ENCODE measurements at regions of chr15 and their contacts with region 1.

Region 1: DNA sequence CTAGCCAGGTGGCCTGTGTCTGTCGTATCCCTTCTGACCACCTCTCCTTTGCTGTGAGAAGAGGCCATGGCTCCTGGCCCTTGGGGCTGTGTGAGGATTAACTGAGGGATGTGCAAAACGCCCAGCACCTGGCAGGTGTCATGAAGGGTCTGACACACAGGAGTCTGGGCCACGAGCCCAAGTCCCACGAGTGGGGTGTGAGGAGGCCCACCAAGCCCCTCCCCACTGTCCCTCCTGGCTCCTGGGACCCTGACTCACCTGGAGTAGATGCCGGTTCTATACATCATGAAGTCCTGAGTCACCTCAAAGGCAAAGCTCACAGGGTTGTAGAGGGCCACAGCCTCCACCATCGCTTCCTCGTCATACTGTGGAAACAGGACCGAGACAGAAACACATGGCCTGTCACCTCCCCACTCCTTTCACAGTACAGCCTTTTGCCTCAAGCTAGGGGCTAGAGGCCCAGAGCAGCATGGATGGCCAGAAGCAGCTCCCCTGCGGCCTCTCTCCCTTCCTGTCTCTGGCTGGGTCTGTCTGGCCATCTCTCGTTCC is 19.7 kb downstream of the CTSH start:
- DNase-seq: no peak
- ATAC-seq: no peak
- H3K4me3 ChIP-seq: no peak overlapping the region
- H3K27ac ChIP-seq: peak overlapping the region; percentile 57; the same call in 1 of the 2 replicates
- H3K4me1 ChIP-seq: peaks cover 31% of the 10 kb centered on the region
- H3K27me3 ChIP-seq: no peaks in the 10 kb centered on the region
- CTCF ChIP-seq: no peak

Region 2: GRCh38 chr15:78108299-78109084 is 816.7 kb before region 1 on chr15:
- CTCF ChIA-PET with region 1: no interaction called
- POLR2A ChIA-PET with region 1: no interaction called
- in situ Hi-C with region 1: no loop called
- intact Hi-C with region 1: no loop called
- DNase-seq: peak; percentile 38
- ATAC-seq: peak; percentile 92
- H3K4me3 ChIP-seq: no peak overlapping the region
- H3K27ac ChIP-seq: no peak overlapping the region
- H3K4me1 ChIP-seq: no peaks in the 10 kb centered on the region
- H3K27me3 ChIP-seq: no peaks in the 10 kb centered on the region
- CTCF ChIP-seq: peak; percentile 95

Region 3: DNA sequence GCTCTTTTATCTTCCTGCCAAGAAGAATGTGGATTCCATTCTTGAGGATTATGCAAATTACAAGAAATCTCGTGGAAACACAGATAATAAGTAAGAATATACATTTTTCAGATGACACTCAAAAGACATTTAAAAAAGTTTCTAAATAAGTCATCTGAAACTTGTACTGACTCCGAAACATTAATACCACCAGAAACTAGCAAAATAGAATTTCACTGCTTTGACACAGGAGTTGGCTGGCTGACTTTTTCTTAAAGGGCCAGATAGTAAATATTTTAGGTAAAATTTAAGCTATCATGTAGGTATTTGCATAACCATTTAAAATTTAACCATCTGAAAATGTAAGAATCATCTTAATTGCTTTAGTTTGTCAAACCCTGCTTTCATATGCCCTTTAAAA is 31.6 kb before region 1 on chr15:
- CTCF ChIA-PET with region 1: no interaction called
- POLR2A ChIA-PET with region 1: interaction called, 14 read pairs
- in situ Hi-C with region 1: no loop called
- intact Hi-C with region 1: no loop called
- DNase-seq: no peak
- ATAC-seq: no peak
- H3K4me3 ChIP-seq: no peak overlapping the region
- H3K27ac ChIP-seq: no peak overlapping the region
- H3K4me1 ChIP-seq: no peaks in the 10 kb centered on the region
- H3K27me3 ChIP-seq: no peaks in the 10 kb centered on the region
- CTCF ChIP-seq: no peak

Region 4: GRCh38 chr15:78960308-78960707 is 35.2 kb after region 1 on chr15:
- CTCF ChIA-PET with region 1: no interaction called
- POLR2A ChIA-PET with region 1: no interaction called
- in situ Hi-C with region 1: no loop called
- intact Hi-C with region 1: no loop called
- DNase-seq: no peak
- ATAC-seq: no peak
- H3K4me3 ChIP-seq: no peak overlapping the region
- H3K27ac ChIP-seq: no peak overlapping the region
- H3K4me1 ChIP-seq: no peaks in the 10 kb centered on the region
- H3K27me3 ChIP-seq: no peaks in the 10 kb centered on the region
- CTCF ChIP-seq: no peak

Region 5: GRCh38 chr15:79071901-79072300 is 146.8 kb after region 1 on chr15:
- CTCF ChIA-PET with region 1: no interaction called
- POLR2A ChIA-PET with region 1: no interaction called
- in situ Hi-C with region 1: no loop called
- intact Hi-C with region 1: no loop called
- DNase-seq: no peak
- ATAC-seq: no peak
- H3K4me3 ChIP-seq: no peak overlapping the region
- H3K27ac ChIP-seq: no peak overlapping the region
- H3K4me1 ChIP-seq: no peaks in the 10 kb centered on the region
- H3K27me3 ChIP-seq: no peaks in the 10 kb centered on the region
- CTCF ChIP-seq: no peak

Measured in Panc1 (cell line).